ENCODE measurements at regions of chr10 and their contacts with region 1.

Region 1: GRCh38 chr10:102368072-102368471 is 27.4 kb upstream of the NFKB2 start:
- DNase-seq: no peak
- ATAC-seq: no peak
- H3K4me3 ChIP-seq: no peak overlapping the region
- H3K4me3 Mint-ChIP-seq: no peak overlapping the region
- H3K27ac ChIP-seq: no peak overlapping the region
- H3K27ac Mint-ChIP-seq: no peak overlapping the region
- H3K4me1 ChIP-seq: no peaks in the 10 kb centered on the region
- H3K4me1 Mint-ChIP-seq: no peaks in the 10 kb centered on the region
- H3K27me3 ChIP-seq: no peaks in the 10 kb centered on the region
- H3K27me3 Mint-ChIP-seq: no peaks in the 10 kb centered on the region
- CTCF ChIP-seq: no peak

Region 2: GRCh38 chr10:103517234-103518085 is 1149.4 kb after region 1 on chr10:
- CTCF ChIA-PET with region 1: no interaction called
- POLR2A ChIA-PET with region 1: interaction called, 10 read pairs
- intact Hi-C with region 1: no loop called
- DNase-seq: no peak
- ATAC-seq: no peak
- H3K4me3 ChIP-seq: no peak overlapping the region
- H3K4me3 Mint-ChIP-seq: no peak overlapping the region
- H3K27ac ChIP-seq: no peak overlapping the region
- H3K27ac Mint-ChIP-seq: no peak overlapping the region
- H3K4me1 ChIP-seq: peaks cover 0 to 7% of the 10 kb centered on the region in 2 donors
- H3K4me1 Mint-ChIP-seq: peaks cover 8% of the 10 kb centered on the region
- H3K27me3 ChIP-seq: no peaks in the 10 kb centered on the region
- H3K27me3 Mint-ChIP-seq: peaks cover 11% of the 10 kb centered on the region
- CTCF ChIP-seq: no peak

Measured in B cell (primary cell).